Ascending aorta (tissue), 2 donors: ENCODE measurements at regions of chr11 and their contacts with region 1.

Region 1: GRCh38 chr11:126268708-126269579 is at the starts of genes FOXRED1 and SRPRA:
- DNase-seq: peak; percentile 97 to 100
- H3K4me3 ChIP-seq: peak within 1 kb of the TSS; percentile 81 to 93
- H3K27ac ChIP-seq: peak within 1 kb of the TSS; percentile 90 to 91
- H3K4me1 ChIP-seq: peaks cover 0 to 13% of the 10 kb centered on the region in 2 donors
- H3K27me3 ChIP-seq: no peaks in the 10 kb centered on the region
- CTCF ChIP-seq: no peak
- total RNA-seq, gene FOXRED1: 1.8 TPM
- total RNA-seq, gene SRPRA: 49.7 TPM

Region 2: GRCh38 chr11:125625630-125626287 is 643.2 kb before region 1 on chr11:
- intact Hi-C with region 1: loop called (anchors 10 kb)
- DNase-seq: peak; percentile 34 to 92
- H3K4me3 ChIP-seq: peak overlapping the region; percentile 65 to 68
- H3K27ac ChIP-seq: peak overlapping the region; percentile 88 to 95
- H3K4me1 ChIP-seq: peaks cover 0 to 17% of the 10 kb centered on the region in 2 donors
- H3K27me3 ChIP-seq: no peaks in the 10 kb centered on the region
- CTCF ChIP-seq: no peak

Region 3: GRCh38 chr11:126062679-126063506 is 206.1 kb before region 1 on chr11 and contains the start of gene CDON:
- intact Hi-C with region 1: loop called (anchors 2 kb)
- DNase-seq: peak; percentile 43 to 93
- H3K4me3 ChIP-seq: peak within 1 kb of the TSS; percentile 78 to 89
- H3K27ac ChIP-seq: peak within 1 kb of the TSS; percentile 64 to 68
- H3K4me1 ChIP-seq: peaks cover 0 to 8% of the 10 kb centered on the region in 2 donors
- H3K27me3 ChIP-seq: no peaks in the 10 kb centered on the region
- CTCF ChIP-seq: peak in 1 of 3 experiments; percentile 12
- total RNA-seq, gene CDON: 33.0 TPM

Region 4: DNA sequence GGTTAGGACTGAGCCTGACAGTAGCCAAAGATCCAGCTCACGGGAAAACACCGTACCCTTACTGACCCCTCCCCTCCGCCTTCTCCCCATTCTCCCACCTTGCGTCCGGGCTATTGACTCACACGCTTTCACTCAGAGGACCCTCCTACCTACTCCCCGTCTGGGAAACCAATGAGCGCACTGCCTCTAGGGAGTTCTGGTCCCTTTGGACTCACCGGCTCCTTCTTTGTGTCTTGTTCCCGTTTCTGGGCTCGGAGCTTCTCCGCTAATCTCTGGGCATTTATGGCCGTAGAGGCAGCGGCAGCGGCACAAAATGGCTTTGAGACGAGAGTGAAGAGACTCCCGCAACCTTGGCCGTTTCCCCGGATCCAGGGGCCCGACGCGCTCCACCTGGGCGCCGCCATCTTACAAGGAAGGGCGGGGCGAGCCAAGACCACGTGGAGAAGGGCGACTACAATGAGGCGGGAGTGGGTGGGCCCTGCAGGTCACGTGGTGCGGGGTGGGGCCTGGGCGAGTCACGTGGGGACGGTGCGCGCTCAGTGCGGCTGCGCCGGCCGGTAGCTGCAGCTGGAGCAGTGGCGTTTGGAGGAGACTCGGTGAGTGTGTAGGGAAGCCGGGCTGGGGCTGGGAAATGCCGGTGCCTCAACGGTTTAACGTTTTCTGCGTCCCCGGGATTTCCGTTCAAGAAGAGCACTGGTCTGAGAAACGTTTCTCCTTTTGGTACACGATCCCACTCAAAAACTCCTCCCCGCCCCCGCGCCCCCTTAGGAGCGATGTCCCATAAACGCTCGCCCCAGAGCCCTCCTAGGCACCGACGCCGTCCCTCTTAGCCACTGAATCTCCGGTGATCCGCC is 57.5 kb before region 1 on chr11 and contains the starts of genes FAM118B and RPUSD4:
- intact Hi-C with region 1: loop called (anchors 2 kb)
- DNase-seq: peak; percentile 90 to 99
- H3K4me3 ChIP-seq: peak within 1 kb of the TSS; percentile 78 to 89
- H3K27ac ChIP-seq: peak within 1 kb of the TSS; percentile 6 to 42
- H3K4me1 ChIP-seq: peaks cover 0 to 5% of the 10 kb centered on the region in 2 donors
- H3K27me3 ChIP-seq: no peaks in the 10 kb centered on the region
- CTCF ChIP-seq: no peak
- total RNA-seq, gene FAM118B: 14.0 TPM
- total RNA-seq, gene RPUSD4: 7.3 TPM

Region 5: DNA sequence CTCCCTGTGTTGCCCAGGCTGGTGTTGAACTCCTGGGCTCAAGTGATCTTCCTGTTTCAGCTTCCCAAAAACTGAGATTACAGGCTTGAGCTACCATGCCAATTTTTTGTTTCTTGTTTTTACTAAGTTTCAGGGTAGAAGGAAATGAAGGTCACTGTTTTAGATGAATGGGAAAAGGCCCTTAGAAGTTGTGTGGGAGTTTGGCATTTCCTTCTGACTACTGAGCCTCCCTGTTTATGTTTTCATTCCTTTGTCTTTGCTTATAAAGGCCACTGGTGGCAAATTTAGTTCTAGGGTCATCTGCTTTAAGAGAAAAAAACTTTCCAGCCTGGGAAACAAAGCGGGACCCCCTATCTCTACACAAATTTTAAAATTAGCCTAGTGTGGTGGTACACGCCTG is 22.3 kb before region 1 on chr11:
- intact Hi-C with region 1: no loop called
- DNase-seq: no peak
- H3K4me3 ChIP-seq: no peak overlapping the region
- H3K27ac ChIP-seq: no peak overlapping the region
- H3K4me1 ChIP-seq: no peaks in the 10 kb centered on the region
- H3K27me3 ChIP-seq: no peaks in the 10 kb centered on the region
- CTCF ChIP-seq: no peak

Region 6: GRCh38 chr11:126282736-126283591 is 14.0 kb after region 1 on chr11 and contains the start of gene TIRAP:
- intact Hi-C with region 1: loop called (anchors 1 kb)
- DNase-seq: peak; percentile 24 to 83
- H3K4me3 ChIP-seq: peak within 1 kb of the TSS; percentile 81 to 86
- H3K27ac ChIP-seq: peak within 1 kb of the TSS; percentile 87 to 94
- H3K4me1 ChIP-seq: peaks cover 0 to 6% of the 10 kb centered on the region in 2 donors
- H3K27me3 ChIP-seq: no peaks in the 10 kb centered on the region
- CTCF ChIP-seq: no peak
- total RNA-seq, gene TIRAP: 8.7 TPM

Region 7: DNA sequence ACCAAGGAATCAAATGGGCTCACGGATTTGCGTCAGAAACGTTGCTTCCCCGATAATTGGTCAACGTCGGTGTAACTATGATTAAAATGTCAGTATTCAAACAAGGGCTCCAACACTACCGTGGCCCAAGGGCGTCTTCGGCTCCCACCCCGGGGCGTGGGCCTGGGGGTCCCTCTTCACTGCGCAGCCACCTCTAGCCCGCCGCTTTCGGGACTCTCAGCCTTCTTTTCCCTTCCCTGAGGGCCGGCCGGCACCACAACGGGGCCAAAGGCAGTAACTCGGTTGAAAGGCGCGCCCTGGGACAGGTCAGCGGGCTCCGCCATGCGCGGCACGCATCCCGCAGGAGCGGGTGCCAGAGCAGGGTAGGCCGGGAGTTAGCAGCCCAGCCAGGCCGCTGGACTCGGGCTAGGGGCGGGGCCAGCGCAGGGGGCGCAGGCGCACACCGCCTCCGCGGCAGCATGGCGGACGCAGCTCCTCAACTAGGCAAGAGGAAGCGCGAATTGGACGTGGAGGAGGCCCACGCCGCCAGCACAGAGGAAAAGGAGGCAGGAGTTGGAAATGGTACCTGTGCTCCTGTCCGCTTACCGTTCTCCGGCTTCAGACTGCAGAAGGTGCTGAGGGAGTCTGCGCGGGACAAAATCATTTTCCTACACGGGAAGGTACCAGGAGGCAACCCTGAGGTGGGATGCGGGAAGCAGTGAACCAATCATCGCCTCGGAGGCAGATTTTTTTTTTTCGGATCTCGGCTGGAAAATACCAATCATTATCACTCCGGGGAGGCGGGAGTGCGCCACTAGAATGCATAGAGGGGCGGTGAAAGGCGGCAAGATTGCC is 34.9 kb after region 1 on chr11 and contains the start of gene DCPS:
- intact Hi-C with region 1: loop called (anchors 1 kb)
- DNase-seq: peak; percentile 54 to 94
- H3K4me3 ChIP-seq: peak within 1 kb of the TSS; percentile 56 to 74
- H3K27ac ChIP-seq: peak within 1 kb of the TSS; percentile 80 to 94
- H3K4me1 ChIP-seq: peaks cover 0 to 6% of the 10 kb centered on the region in 2 donors
- H3K27me3 ChIP-seq: no peaks in the 10 kb centered on the region
- CTCF ChIP-seq: no peak
- total RNA-seq, gene DCPS: 19.6 TPM

Region 8: DNA sequence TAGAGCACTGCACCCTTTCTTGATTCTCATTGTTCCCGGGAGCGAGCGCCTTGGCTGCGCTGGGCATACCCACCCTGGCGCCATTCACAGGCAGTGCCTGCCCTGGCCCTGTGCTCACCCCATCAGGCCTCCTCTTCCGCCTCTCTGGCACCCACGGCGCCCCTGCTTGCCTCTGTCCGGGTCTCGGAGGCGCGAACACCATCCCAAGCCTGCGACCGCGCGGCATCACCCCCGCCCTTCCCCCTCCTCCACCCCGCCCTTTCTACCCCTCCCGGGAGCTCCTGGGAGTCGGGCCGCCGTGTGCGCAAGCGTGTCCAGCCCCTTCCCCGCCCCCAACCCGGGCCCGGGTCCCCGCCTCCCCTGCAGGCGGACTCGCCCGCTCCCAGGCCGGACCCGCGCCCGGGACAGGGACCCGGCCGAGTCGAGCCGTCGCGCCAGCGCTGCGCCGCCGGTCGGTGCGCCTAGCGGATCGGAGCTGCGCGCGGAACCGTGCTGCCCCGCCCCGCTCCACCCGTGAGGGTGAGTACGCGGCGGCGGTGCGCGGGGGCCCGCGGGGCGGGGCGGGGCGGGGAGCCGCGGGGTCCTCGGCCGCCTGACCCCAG is 86.5 kb after region 1 on chr11 and contains the start of gene ST3GAL4:
- intact Hi-C with region 1: loop called (anchors 5 kb)
- DNase-seq: peak in 1 of 2 donors; percentile 83
- H3K4me3 ChIP-seq: peak within 1 kb of the TSS; percentile 84 to 88
- H3K27ac ChIP-seq: peak within 1 kb of the TSS; percentile 80 to 86
- H3K4me1 ChIP-seq: peaks cover 22 to 53% of the 10 kb centered on the region in 2 donors
- H3K27me3 ChIP-seq: no peaks in the 10 kb centered on the region
- CTCF ChIP-seq: no peak
- total RNA-seq, gene ST3GAL4: 61.4 TPM